HepG2 (cell line): ENCODE measurements at regions of chr5 and their contacts with region 1.

Region 1: GRCh38 chr5:17216176-17216973 is 1.1 kb upstream of the BASP1 start:
- DNase-seq: peak; percentile 42
- ATAC-seq: peak; percentile 94
- H3K4me3 ChIP-seq: no peak overlapping the region
- H3K27ac ChIP-seq: no peak overlapping the region
- H3K4me1 ChIP-seq: no peaks in the 10 kb centered on the region
- H3K27me3 ChIP-seq: no peaks in the 10 kb centered on the region
- CTCF ChIP-seq: peak; percentile 89
- EP300 ChIP-seq: no peak
- POLR2A ChIP-seq: no peak
- RAD21 ChIP-seq: peak; percentile 77

Region 2: GRCh38 chr5:17228821-17229291 is 12.5 kb after region 1 on chr5:
- CTCF ChIA-PET with region 1: no interaction called
- POLR2A ChIA-PET with region 1: no interaction called
- in situ Hi-C with region 1: no loop called
- intact Hi-C with region 1: no loop called
- DNase-seq: no peak
- ATAC-seq: no peak
- H3K4me3 ChIP-seq: no peak overlapping the region
- H3K27ac ChIP-seq: no peak overlapping the region
- H3K4me1 ChIP-seq: no peaks in the 10 kb centered on the region
- H3K27me3 ChIP-seq: peaks cover 0 to 3% of the 10 kb centered on the region in 2 experiments; a peak in 1 of 5 replicates
- CTCF ChIP-seq: no peak
- EP300 ChIP-seq: no peak
- POLR2A ChIP-seq: no peak
- RAD21 ChIP-seq: no peak

Region 3: DNA sequence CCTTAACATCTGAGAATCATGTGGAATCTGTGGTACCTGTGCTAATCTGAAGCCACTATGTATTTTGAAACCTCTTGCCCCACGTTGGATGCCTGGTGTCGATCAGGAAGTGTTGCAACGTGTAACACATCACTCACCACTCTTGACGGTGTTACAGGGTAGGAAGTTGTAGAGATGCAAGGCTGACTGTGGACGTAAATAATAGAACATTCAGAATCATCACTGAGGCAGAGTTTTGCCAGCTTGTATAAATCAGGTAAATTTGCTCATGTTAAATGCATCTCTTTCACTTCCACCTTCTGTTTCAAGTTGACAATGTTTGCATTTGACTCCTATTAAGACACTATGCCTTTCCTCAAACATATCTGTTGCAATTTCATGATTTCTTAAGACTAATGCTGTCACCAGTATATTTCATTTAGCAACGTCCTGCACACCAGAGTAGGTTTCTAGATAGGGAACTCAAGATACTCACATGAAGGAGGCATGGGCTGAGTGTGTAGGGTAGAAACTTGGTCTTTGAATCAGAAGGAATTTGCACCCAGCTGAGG is 39.2 kb after region 1 on chr5:
- CTCF ChIA-PET with region 1: no interaction called
- POLR2A ChIA-PET with region 1: no interaction called
- in situ Hi-C with region 1: no loop called
- intact Hi-C with region 1: no loop called
- DNase-seq: no peak
- ATAC-seq: no peak
- H3K4me3 ChIP-seq: no peak overlapping the region
- H3K27ac ChIP-seq: no peak overlapping the region
- H3K4me1 ChIP-seq: no peaks in the 10 kb centered on the region
- H3K27me3 ChIP-seq: no peaks in the 10 kb centered on the region; a peak in 1 of 5 replicates
- CTCF ChIP-seq: no peak
- EP300 ChIP-seq: no peak
- POLR2A ChIP-seq: no peak
- RAD21 ChIP-seq: no peak

Region 4: GRCh38 chr5:17379100-17379951 is 163.0 kb after region 1 on chr5:
- CTCF ChIA-PET with region 1: no interaction called
- POLR2A ChIA-PET with region 1: no interaction called
- in situ Hi-C with region 1: no loop called
- intact Hi-C with region 1: no loop called
- DNase-seq: no peak
- ATAC-seq: no peak
- H3K4me3 ChIP-seq: no peak overlapping the region
- H3K27ac ChIP-seq: no peak overlapping the region
- H3K4me1 ChIP-seq: no peaks in the 10 kb centered on the region
- H3K27me3 ChIP-seq: no peaks in the 10 kb centered on the region
- CTCF ChIP-seq: no peak
- EP300 ChIP-seq: no peak
- POLR2A ChIP-seq: no peak
- RAD21 ChIP-seq: no peak

Region 5: GRCh38 chr5:18305297-18305924 is 1089.0 kb after region 1 on chr5:
- CTCF ChIA-PET with region 1: interaction called, 20 read pairs
- POLR2A ChIA-PET with region 1: no interaction called
- in situ Hi-C with region 1: loop called (anchors 5 kb)
- intact Hi-C with region 1: loop called (anchors 1 kb)
- DNase-seq: peak; percentile 13
- ATAC-seq: peak; percentile 78
- H3K4me3 ChIP-seq: no peak overlapping the region
- H3K27ac ChIP-seq: no peak overlapping the region
- H3K4me1 ChIP-seq: no peaks in the 10 kb centered on the region
- H3K27me3 ChIP-seq: no peaks in the 10 kb centered on the region
- CTCF ChIP-seq: peak; percentile 76
- EP300 ChIP-seq: no peak
- POLR2A ChIP-seq: no peak
- RAD21 ChIP-seq: peak; percentile 47; the same call in 1 of the 2 replicates

Region 6: DNA sequence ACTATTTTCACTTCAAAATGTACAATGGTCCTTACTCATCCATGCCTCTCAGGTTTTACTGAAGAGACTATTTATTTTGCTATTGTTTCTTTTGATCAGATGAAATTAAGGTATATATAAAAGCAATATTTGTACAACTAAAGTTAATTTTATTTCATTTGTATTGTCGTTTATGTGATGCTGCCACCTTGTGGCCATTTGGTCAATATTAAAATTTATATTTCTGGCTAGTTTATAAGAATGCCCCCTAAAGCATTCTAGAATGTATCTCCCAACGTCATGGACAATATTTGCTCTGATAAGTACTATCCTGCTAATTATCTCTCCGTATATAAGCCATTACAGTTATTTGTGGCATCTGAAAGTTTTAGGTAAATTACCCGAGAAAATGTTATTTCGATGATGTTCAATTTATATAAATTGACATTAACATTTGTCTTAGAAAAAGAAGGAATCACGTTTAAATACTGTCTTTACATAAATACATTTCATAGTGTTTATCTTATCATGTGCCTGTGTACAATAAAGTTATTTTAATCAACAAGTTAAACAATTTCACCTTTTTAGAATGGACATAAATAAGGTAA is 1097.9 kb after region 1 on chr5:
- CTCF ChIA-PET with region 1: interaction called, 18 read pairs
- POLR2A ChIA-PET with region 1: no interaction called
- in situ Hi-C with region 1: loop called (anchors 5 kb)
- intact Hi-C with region 1: loop called (anchors 2 kb)
- DNase-seq: no peak
- ATAC-seq: no peak
- H3K4me3 ChIP-seq: no peak overlapping the region
- H3K27ac ChIP-seq: no peak overlapping the region
- H3K4me1 ChIP-seq: no peaks in the 10 kb centered on the region
- H3K27me3 ChIP-seq: no peaks in the 10 kb centered on the region
- CTCF ChIP-seq: peak; percentile 24; the same call in 1 of the 2 replicates
- EP300 ChIP-seq: no peak
- POLR2A ChIP-seq: no peak
- RAD21 ChIP-seq: no peak